Vagina (tissue), 2 donors: ENCODE measurements at regions of chr2 and their contacts with region 1.

Region 1: GRCh38 chr2:158745044-158745865 is 49.9 kb upstream of the DAPL1 start:
- DNase-seq: no peak
- H3K4me3 ChIP-seq: no peak overlapping the region
- H3K27ac ChIP-seq: no peak overlapping the region
- H3K4me1 ChIP-seq: peaks cover 12% of the 10 kb centered on the region
- H3K27me3 ChIP-seq: no peaks in the 10 kb centered on the region
- CTCF ChIP-seq: peak in 2 of 3 experiments; percentile 34 to 48
- POLR2A ChIP-seq: no peak

Region 2: DNA sequence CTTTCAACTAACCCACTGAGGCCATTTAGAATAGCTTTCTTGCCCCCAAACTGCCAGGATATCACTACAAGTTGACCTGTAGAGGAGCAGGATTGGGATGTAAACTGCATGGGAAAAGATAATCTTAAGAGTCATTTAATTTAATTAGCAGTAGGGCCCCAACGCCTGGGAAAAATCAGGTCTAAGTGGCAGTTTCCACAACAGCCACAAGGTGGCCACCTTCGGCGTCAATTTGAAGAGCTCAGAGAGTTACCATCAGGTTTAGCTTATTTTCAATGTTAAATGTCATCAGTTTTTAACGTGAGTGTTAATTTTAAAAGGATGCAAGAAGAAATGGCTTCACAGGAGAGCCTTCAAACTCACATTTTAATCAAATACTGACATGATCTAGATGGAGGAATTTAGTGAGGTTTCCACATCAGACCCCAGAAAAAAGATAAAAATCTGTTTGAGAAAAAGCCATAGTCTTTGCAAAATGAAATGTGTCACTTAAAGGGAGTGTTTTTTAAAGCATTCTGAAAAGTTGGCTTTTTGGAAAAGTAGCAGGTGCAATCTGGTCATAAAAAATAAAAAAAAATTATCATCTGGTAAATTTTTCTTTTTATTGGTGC is 720.9 kb before region 1 on chr2:
- intact Hi-C with region 1: loop called (anchors 10 kb)
- DNase-seq: no peak
- H3K4me3 ChIP-seq: no peak overlapping the region
- H3K27ac ChIP-seq: no peak overlapping the region
- H3K4me1 ChIP-seq: no peaks in the 10 kb centered on the region
- H3K27me3 ChIP-seq: no peaks in the 10 kb centered on the region
- CTCF ChIP-seq: peak; percentile 61 to 82 (median 61)
- POLR2A ChIP-seq: no peak